Body of pancreas (tissue), 4 donors: ENCODE measurements at regions of chr3 and their contacts with region 1.

Region 1: DNA sequence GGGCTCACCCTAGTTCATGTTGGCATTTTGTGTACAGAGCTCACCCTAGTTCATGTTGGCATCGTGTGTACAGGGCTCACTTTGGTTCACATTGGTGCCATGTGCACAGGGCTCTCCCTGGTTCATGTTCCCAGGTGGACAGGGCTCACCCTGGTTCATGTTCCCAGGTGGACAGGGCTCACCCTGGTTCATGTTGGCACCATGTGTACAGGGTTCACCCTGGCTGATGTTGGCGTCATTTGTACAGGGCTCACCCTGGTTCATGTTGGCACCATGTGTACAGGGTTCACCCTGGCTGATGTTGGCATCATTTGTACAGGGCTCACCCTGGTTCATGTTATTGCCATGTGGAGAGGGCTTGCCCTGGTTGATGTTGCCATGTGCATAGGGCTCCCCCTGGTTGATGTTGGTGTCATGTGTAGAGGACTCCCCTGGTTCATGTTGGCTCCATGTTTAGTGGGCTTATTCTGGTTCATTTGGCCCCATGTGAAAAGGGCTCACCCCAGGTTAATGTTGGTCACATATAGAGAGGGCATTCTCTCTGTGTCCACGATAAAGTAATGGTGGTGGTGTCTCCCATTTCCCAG is 31.7 kb upstream of the NR2C2 start:
- DNase-seq: no peak
- ATAC-seq: no peak
- H3K4me3 ChIP-seq: no peak overlapping the region
- H3K27ac ChIP-seq: no peak overlapping the region
- H3K4me1 ChIP-seq: no peaks in the 10 kb centered on the region
- H3K27me3 ChIP-seq: no peaks in the 10 kb centered on the region
- CTCF ChIP-seq: no peak
- POLR2A ChIP-seq: no peak

Region 2: GRCh38 chr3:14511628-14512280 is 404.0 kb before region 1 on chr3:
- intact Hi-C with region 1: loop called (anchors 10 kb)
- DNase-seq: no peak
- ATAC-seq: no peak
- H3K4me3 ChIP-seq: no peak overlapping the region
- H3K27ac ChIP-seq: no peak overlapping the region
- H3K4me1 ChIP-seq: no peaks in the 10 kb centered on the region
- H3K27me3 ChIP-seq: no peaks in the 10 kb centered on the region
- CTCF ChIP-seq: no peak
- POLR2A ChIP-seq: no peak

Region 3: GRCh38 chr3:14633819-14634424 is 281.8 kb before region 1 on chr3:
- intact Hi-C with region 1: loop called (anchors 10 kb)
- DNase-seq: peak; percentile 59 to 75 (median 66)
- ATAC-seq: peak; percentile 62
- H3K4me3 ChIP-seq: no peak overlapping the region
- H3K27ac ChIP-seq: no peak overlapping the region
- H3K4me1 ChIP-seq: no peaks in the 10 kb centered on the region
- H3K27me3 ChIP-seq: no peaks in the 10 kb centered on the region
- CTCF ChIP-seq: peak; percentile 63 to 84 (median 68)
- POLR2A ChIP-seq: no peak

Region 4: DNA sequence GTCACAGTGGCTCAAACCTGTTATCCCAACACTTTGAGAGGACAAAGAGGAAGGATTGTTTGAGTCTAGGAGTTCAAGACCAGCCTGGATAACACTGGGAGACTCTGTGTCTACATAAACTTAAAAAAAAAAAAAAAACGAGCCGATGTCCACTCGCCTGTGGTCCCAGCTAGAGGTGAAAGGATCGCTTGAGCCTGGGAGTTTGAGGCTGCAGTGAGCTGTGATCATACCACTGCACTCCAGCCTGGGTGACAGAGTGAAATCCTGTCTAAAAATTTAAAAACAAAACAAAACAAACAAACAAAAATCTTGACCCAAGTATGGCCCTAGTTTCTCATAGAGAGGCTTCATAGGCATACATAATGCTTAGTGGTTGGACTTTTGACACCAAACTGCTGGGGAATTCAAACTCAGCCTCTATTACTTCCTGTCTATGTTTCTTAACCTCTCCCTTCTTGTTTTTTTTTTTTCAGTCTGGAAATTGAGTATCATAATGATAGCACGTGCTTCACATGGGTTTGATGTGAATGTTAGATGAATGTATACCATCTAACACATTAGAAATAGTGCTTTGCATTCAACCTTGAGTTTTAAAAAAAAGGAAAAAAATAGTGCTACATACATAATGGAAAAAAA is 243.9 kb after region 1 on chr3:
- intact Hi-C with region 1: no loop called
- DNase-seq: no peak
- ATAC-seq: no peak
- H3K4me3 ChIP-seq: no peak overlapping the region
- H3K27ac ChIP-seq: no peak overlapping the region
- H3K4me1 ChIP-seq: no peaks in the 10 kb centered on the region
- H3K27me3 ChIP-seq: no peaks in the 10 kb centered on the region
- CTCF ChIP-seq: no peak
- POLR2A ChIP-seq: no peak